Aorta (tissue), 5 donors: ENCODE measurements at regions of chr6 and their contacts with region 1.

Region 1: GRCh38 chr6:43013843-43014433 is at the starts of genes KLHDC3 and MEA1:
- DNase-seq: peak; percentile 99 to 100
- ATAC-seq: peak; percentile 97
- H3K4me3 ChIP-seq: peak within 1 kb of the TSS; percentile 90 to 94
- H3K27ac ChIP-seq: peak within 1 kb of the TSS in 1 of 2 donors; percentile 31
- H3K4me1 ChIP-seq: no peaks in the 10 kb centered on the region
- H3K27me3 ChIP-seq: no peaks in the 10 kb centered on the region
- total RNA-seq, gene KLHDC3: 55.7 to 61.7 TPM
- total RNA-seq, gene MEA1: 44.5 to 44.6 TPM

Region 2: DNA sequence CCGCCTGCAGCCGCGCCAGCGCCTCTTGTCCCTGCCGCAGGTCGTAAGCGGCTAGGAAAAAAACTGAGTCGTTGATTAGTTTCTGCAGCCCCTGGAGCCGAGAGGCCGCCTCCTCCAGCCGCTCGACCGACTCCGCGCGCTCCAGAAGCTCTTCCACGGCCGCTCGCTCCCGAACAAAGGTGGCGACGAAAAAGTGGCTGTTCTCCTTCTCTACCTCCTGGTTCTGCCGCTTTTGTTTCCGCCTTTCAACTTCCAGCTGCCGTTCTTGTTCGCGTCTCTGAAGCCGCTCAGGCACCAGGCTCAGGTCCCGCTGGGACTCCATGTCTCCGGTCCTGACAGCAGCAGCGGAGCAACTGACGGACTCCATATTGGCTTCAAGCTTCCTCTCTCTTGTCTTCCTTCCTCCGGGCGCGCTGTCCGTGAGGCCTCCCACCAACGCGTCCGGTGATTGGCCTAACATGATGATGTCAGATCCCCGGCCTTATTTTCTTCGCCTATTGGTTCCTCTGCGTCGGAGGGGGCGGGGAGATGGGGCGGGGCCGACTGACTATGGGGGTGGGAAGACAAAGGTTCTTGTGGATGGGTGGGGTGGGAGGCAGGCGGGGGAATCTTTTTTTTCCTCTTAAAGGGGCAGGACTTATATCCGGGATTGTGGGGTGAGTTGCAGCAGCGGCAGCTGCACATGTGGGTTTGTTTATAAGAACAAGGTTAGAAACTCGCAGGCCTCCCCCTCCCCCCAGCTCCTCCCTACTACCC is 268.1 kb before region 1 on chr6 and contains the start of gene TBCC:
- intact Hi-C with region 1: no loop called
- DNase-seq: peak; percentile 97
- ATAC-seq: peak; percentile 96
- H3K4me3 ChIP-seq: peak within 1 kb of the TSS; percentile 51 to 83
- H3K27ac ChIP-seq: peak within 1 kb of the TSS; percentile 37 to 86
- H3K4me1 ChIP-seq: peaks cover 0 to 3% of the 10 kb centered on the region in 2 donors
- H3K27me3 ChIP-seq: no peaks in the 10 kb centered on the region
- total RNA-seq, gene TBCC: 16.1 to 16.8 TPM

Region 3: GRCh38 chr6:42928986-42929820 is 84.7 kb before region 1 on chr6 and contains the start of gene CNPY3:
- intact Hi-C with region 1: loop called in 1 of 2 experiments (anchors 1 kb)
- DNase-seq: peak; percentile 97 to 98
- ATAC-seq: peak; percentile 97
- H3K4me3 ChIP-seq: peak within 1 kb of the TSS; percentile 20 to 65
- H3K27ac ChIP-seq: peak within 1 kb of the TSS; percentile 34 to 88
- H3K4me1 ChIP-seq: no peaks in the 10 kb centered on the region
- H3K27me3 ChIP-seq: no peaks in the 10 kb centered on the region
- total RNA-seq, gene CNPY3: 28.8 to 50.1 TPM

Region 4: GRCh38 chr6:42978839-42979522 is 35.0 kb before region 1 on chr6 and contains the start of gene PEX6:
- intact Hi-C with region 1: loop called in 1 of 2 experiments (anchors 5 kb)
- DNase-seq: peak; percentile 95 to 97
- ATAC-seq: peak; percentile 94
- H3K4me3 ChIP-seq: peak within 1 kb of the TSS; percentile 66 to 80
- H3K27ac ChIP-seq: peak within 1 kb of the TSS; percentile 72 to 83
- H3K4me1 ChIP-seq: no peaks in the 10 kb centered on the region
- H3K27me3 ChIP-seq: no peaks in the 10 kb centered on the region
- total RNA-seq, gene PEX6: 11.7 to 16.1 TPM

Region 5: GRCh38 chr6:43053545-43054205 is 39.7 kb after region 1 on chr6 and contains the start of gene CUL7:
- intact Hi-C with region 1: loop called (anchors 2 kb)
- DNase-seq: peak; percentile 96 to 98
- ATAC-seq: peak; percentile 94
- H3K4me3 ChIP-seq: peak within 1 kb of the TSS; percentile 52 to 61
- H3K27ac ChIP-seq: peak within 1 kb of the TSS in 1 of 2 donors; percentile 82
- H3K4me1 ChIP-seq: no peaks in the 10 kb centered on the region
- H3K27me3 ChIP-seq: no peaks in the 10 kb centered on the region
- total RNA-seq, gene CUL7: 11.0 to 17.5 TPM

Region 6: DNA sequence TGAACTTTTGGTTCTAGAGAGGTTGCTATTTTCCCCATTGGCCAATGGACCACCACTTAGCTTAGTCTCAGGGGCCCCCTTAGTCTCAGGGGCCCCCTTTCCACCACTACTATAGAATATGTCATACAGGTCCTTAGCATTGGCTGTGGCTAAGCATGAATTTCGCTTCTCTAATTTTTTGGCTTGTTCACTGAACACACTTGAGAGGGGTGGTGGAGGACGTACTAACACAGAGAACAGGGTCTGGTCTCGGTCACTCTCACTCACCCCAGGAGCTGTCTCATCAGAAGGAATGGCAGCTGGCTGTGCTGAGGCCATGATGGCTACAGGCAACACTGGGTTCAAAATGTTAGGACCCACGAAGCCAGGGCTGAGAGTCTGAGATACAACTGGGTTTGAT is 325.2 kb after region 1 on chr6:
- intact Hi-C with region 1: no loop called
- DNase-seq: no peak
- ATAC-seq: no peak
- H3K4me3 ChIP-seq: no peak overlapping the region
- H3K27ac ChIP-seq: no peak overlapping the region
- H3K4me1 ChIP-seq: no peaks in the 10 kb centered on the region
- H3K27me3 ChIP-seq: no peaks in the 10 kb centered on the region